Activated T-helper 1 cell treated with anti-CD3 and anti-CD28 coated beads, Interleukin-12 subunit alpha, Interleukin-12 subunit beta, Interleukin-2, Interleukin-4 antibody, amounts not matched to agents 30 ng/mL and 10 ng/mL and 1 ng/mL, durations not matched to agents 14 hours and 24 hours and 36 hours (primary cell): ENCODE measurements at regions of chrX and their contacts with region 1.

Region 1: GRCh38 chrX:15737960-15738902 is at the start of gene CA5B:
- DNase-seq: peak; percentile 93
- H3K4me3 Mint-ChIP-seq: peak within 1 kb of the TSS; percentile 86
- H3K27ac Mint-ChIP-seq: peak within 1 kb of the TSS; percentile 77
- H3K4me1 Mint-ChIP-seq: peaks cover 20% of the 10 kb centered on the region
- H3K27me3 Mint-ChIP-seq: no peaks in the 10 kb centered on the region
- total RNA-seq, gene CA5B: 3.8 and 6.9 TPM in 2 replicates

Region 2: DNA sequence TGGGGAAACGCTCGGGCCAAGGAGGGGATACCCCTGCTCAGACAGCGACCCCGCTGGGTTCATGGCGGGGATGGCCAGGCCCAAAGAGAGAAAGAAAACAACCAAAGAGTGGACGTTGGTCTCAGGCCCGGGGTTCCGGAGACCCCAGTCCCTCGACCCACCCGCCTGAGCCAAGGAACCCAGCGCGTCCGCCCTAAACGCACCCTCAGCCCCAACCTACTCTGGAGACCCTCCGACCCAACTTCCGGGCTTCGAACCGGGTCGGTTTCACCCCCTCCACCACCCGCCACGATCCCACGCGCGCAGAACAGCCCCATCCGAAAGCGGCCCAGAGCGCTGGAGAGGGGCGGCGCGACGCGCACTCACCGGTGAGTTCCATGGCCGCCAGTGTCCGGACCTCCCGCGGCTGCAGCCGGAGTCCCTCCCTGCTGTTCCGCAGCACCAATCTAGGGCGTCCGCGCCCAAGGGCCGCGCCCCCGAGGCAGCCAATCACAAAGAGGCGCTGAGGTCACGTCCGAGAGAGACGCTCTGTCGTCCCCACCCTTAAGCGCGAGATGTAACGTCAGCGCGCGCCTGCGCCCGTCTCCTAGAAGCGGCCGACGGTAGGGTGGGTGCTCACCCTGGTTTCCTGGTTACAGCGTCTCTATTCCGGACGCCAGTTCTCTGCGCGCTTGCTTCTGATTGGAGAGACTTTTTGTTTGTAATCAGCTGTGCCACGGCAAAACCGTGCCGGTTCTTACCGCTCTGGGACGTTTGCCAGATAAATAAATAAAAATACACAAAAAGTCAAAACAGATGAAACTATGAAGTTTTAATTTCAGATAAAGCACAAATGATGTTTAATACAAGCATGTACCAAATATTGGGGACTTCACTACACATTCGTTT is 402.9 kb before region 1 on chrX and contains the start of gene PIGA:
- intact Hi-C with region 1: loop called (anchors 10 kb)
- DNase-seq: peak; percentile 89
- H3K4me3 Mint-ChIP-seq: peak within 1 kb of the TSS; percentile 91
- H3K27ac Mint-ChIP-seq: peak within 1 kb of the TSS; percentile 88
- H3K4me1 Mint-ChIP-seq: peaks cover 14% of the 10 kb centered on the region
- H3K27me3 Mint-ChIP-seq: no peaks in the 10 kb centered on the region
- total RNA-seq, gene PIGA: 23.9 and 25.4 TPM in 2 replicates

Region 3: GRCh38 chrX:15749642-15750610 is 11.7 kb after region 1 on chrX:
- intact Hi-C with region 1: loop called (anchors 1 kb)
- DNase-seq: no peak
- H3K4me3 Mint-ChIP-seq: peak overlapping the region; percentile 45
- H3K27ac Mint-ChIP-seq: peak overlapping the region; percentile 97
- H3K4me1 Mint-ChIP-seq: peaks cover 39% of the 10 kb centered on the region
- H3K27me3 Mint-ChIP-seq: no peaks in the 10 kb centered on the region

Region 4: GRCh38 chrX:15854712-15855567 is 116.7 kb after region 1 on chrX and contains the start of gene AP1S2:
- intact Hi-C with region 1: loop called (anchors 1 kb)
- DNase-seq: peak; percentile 89
- H3K4me3 Mint-ChIP-seq: peak within 1 kb of the TSS; percentile 88
- H3K27ac Mint-ChIP-seq: peak within 1 kb of the TSS; percentile 90
- H3K4me1 Mint-ChIP-seq: peaks cover 10% of the 10 kb centered on the region
- H3K27me3 Mint-ChIP-seq: no peaks in the 10 kb centered on the region
- total RNA-seq, gene AP1S2: 20.7 and 35.3 TPM in 2 replicates

Region 5: DNA sequence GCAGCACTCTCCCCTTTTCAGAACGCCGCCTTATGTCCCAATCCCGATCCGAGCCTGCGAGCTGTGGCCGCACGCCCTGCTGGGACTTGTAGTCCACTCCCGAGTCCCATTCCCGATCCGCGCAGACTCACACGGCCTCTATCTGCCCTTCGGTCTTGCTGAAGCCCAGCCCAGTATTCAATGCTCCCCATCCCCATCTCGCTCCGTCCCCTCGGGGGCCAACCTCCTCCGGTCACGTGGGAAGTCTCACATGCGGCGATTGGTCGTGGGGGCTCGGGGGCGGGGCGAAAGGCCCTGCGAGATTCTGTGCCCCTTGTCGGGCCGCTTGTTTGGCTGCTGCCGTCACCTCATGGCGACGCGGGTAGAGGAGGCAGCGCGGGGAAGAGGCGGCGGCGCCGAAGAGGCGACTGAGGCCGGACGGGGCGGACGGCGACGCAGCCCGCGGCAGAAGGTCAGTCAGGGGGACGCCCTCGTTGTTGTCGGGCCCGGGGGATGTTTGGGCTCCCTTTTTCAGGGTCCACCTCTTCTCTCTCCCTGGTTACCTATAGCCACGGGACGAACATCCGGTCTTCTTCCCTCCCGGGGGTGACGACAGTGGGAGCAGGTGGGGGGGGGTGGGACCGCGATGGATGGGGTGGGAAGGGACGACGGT is 1048.0 kb after region 1 on chrX and contains the start of gene TXLNG:
- intact Hi-C with region 1: loop called (anchors 5 kb)
- DNase-seq: peak; percentile 91
- H3K4me3 Mint-ChIP-seq: peak within 1 kb of the TSS; percentile 92
- H3K27ac Mint-ChIP-seq: peak within 1 kb of the TSS; percentile 94
- H3K4me1 Mint-ChIP-seq: peaks cover 11% of the 10 kb centered on the region
- H3K27me3 Mint-ChIP-seq: no peaks in the 10 kb centered on the region
- total RNA-seq, gene TXLNG: 23.8 and 25.4 TPM in 2 replicates